ENCODE measurements at regions of chr15 and their contacts with region 1.

Region 1: GRCh38 chr15:59688841-59689625 is at the start of gene BNIP2:
- DNase-seq: peak; percentile 94
- H3K4me3 ChIP-seq: peak within 1 kb of the TSS; percentile 94
- H3K27ac ChIP-seq: peak within 1 kb of the TSS; percentile 99
- H3K27me3 ChIP-seq: no peaks in the 10 kb centered on the region
- CTCF ChIP-seq: no peak
- polyA plus RNA-seq, gene BNIP2: 45.4 and 65.9 TPM in 2 replicates

Region 2: GRCh38 chr15:59699810-59700431 is 10.9 kb after region 1 on chr15:
- CTCF ChIA-PET with region 1: interaction called, 13 read pairs
- POLR2A ChIA-PET with region 1: no interaction called
- DNase-seq: no peak
- H3K4me3 ChIP-seq: no peak overlapping the region
- H3K27ac ChIP-seq: no peak overlapping the region
- H3K27me3 ChIP-seq: no peaks in the 10 kb centered on the region
- CTCF ChIP-seq: no peak

Region 3: GRCh38 chr15:59711451-59712243 is 22.6 kb after region 1 on chr15:
- CTCF ChIA-PET with region 1: interaction called, 15 read pairs
- POLR2A ChIA-PET with region 1: no interaction called
- DNase-seq: no peak
- H3K4me3 ChIP-seq: no peak overlapping the region
- H3K27ac ChIP-seq: no peak overlapping the region
- H3K27me3 ChIP-seq: no peaks in the 10 kb centered on the region
- CTCF ChIP-seq: no peak

Region 4: DNA sequence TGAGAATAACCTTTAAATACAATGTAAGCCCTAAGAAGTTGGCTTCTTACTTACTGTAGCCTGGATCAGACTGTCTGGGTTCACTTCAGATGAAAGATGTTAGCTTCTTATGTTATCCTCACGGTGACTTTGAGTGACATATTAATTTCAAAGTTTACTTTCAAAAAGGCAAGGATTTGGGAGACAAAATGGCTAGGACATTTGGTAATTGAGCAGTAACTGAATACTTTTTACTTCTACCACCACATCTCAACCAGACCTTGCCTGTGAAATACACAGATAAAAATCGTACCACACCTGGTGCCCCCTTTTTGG is 36.1 kb after region 1 on chr15:
- CTCF ChIA-PET with region 1: interaction called, 18 read pairs
- POLR2A ChIA-PET with region 1: no interaction called
- DNase-seq: no peak
- H3K4me3 ChIP-seq: no peak overlapping the region
- H3K27ac ChIP-seq: no peak overlapping the region
- H3K27me3 ChIP-seq: peaks cover 4% of the 10 kb centered on the region
- CTCF ChIP-seq: no peak

Region 5: GRCh38 chr15:59736184-59736583 is 47.2 kb after region 1 on chr15:
- CTCF ChIA-PET with region 1: interaction called, 12 read pairs
- POLR2A ChIA-PET with region 1: no interaction called
- DNase-seq: no peak
- H3K4me3 ChIP-seq: no peak overlapping the region
- H3K27ac ChIP-seq: no peak overlapping the region
- H3K27me3 ChIP-seq: no peaks in the 10 kb centered on the region
- CTCF ChIP-seq: peak; percentile 29; the same call in 1 of the 2 replicates

Region 6: GRCh38 chr15:59879506-59880265 is 190.7 kb after region 1 on chr15:
- CTCF ChIA-PET with region 1: no interaction called
- POLR2A ChIA-PET with region 1: no interaction called
- DNase-seq: no peak
- H3K4me3 ChIP-seq: no peak overlapping the region
- H3K27ac ChIP-seq: no peak overlapping the region
- H3K27me3 ChIP-seq: peaks cover 5% of the 10 kb centered on the region
- CTCF ChIP-seq: no peak

Region 7: GRCh38 chr15:60179786-60180391 is 490.9 kb after region 1 on chr15:
- CTCF ChIA-PET with region 1: interaction called, 72 read pairs
- POLR2A ChIA-PET with region 1: no interaction called
- DNase-seq: peak; percentile 18
- H3K4me3 ChIP-seq: no peak overlapping the region
- H3K27ac ChIP-seq: no peak overlapping the region
- H3K27me3 ChIP-seq: no peaks in the 10 kb centered on the region
- CTCF ChIP-seq: peak; percentile 91

Region 8: GRCh38 chr15:60444289-60444912 is 755.4 kb after region 1 on chr15:
- CTCF ChIA-PET with region 1: interaction called, 10 read pairs
- POLR2A ChIA-PET with region 1: no interaction called
- DNase-seq: no peak
- H3K4me3 ChIP-seq: no peak overlapping the region
- H3K27ac ChIP-seq: no peak overlapping the region
- H3K27me3 ChIP-seq: no peaks in the 10 kb centered on the region
- CTCF ChIP-seq: peak; percentile 74